Head of caudate nucleus (tissue), 42 donors: ENCODE measurements at regions of chr4 and their contacts with region 1.

Region 1: DNA sequence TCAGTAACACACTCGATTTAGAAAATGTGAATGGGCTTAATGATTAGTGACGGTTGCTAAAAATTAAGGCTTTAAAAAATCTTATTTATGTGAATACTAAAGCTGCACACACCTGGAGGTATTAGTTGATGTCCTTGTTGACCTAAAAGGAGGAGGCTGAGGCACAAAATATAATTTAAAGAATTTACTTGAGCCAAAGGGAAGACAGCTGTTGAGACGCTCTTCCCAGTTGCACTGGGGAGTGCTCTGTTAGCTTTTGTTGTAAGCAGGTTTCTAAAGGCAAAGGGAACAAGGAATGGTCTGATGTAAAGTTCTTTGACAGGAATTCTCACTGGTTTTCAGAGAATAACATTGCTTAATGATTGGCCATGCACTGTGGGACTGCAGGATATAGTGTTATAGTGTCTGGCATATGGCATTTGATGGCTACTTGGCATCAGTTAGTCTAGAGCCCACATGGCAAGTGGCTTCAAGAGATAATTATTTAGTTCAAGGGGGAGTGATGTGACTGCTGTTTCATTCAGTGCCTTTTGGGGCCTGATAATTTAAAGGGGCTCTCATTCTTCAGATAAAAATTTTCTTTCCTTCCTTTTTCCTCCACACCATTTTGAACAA is 30.8 kb upstream of the PGM2 start:
- DNase-seq: no peak

Region 2: GRCh38 chr4:37609626-37610025 is 186.1 kb before region 1 on chr4:
- intact Hi-C with region 1: loop called (anchors 5 kb)
- DNase-seq: no peak

Region 3: GRCh38 chr4:38069271-38069760 is 273.6 kb after region 1 on chr4:
- intact Hi-C with region 1: no loop called
- DNase-seq: peak in 27 of 42 donors; percentile 31 to 76 (median 60)